Caco-2 (cell line): ENCODE measurements at regions of chr2 and their contacts with region 1.

Region 1: GRCh38 chr2:159155320-159155719 is 131.2 kb downstream of the WDSUB1 start:
- DNase-seq: peak; percentile 58 to 76
- H3K4me3 ChIP-seq: no peak overlapping the region
- H3K4me3 Mint-ChIP-seq: peak overlapping the region; percentile 21
- H3K27ac Mint-ChIP-seq: peak overlapping the region; percentile 54
- H3K4me1 ChIP-seq: peaks cover 56% of the 10 kb centered on the region
- H3K4me1 Mint-ChIP-seq: peaks cover 32% of the 10 kb centered on the region
- H3K27me3 ChIP-seq: no peaks in the 10 kb centered on the region
- H3K27me3 Mint-ChIP-seq: no peaks in the 10 kb centered on the region
- CTCF ChIP-seq: no peak

Region 2: DNA sequence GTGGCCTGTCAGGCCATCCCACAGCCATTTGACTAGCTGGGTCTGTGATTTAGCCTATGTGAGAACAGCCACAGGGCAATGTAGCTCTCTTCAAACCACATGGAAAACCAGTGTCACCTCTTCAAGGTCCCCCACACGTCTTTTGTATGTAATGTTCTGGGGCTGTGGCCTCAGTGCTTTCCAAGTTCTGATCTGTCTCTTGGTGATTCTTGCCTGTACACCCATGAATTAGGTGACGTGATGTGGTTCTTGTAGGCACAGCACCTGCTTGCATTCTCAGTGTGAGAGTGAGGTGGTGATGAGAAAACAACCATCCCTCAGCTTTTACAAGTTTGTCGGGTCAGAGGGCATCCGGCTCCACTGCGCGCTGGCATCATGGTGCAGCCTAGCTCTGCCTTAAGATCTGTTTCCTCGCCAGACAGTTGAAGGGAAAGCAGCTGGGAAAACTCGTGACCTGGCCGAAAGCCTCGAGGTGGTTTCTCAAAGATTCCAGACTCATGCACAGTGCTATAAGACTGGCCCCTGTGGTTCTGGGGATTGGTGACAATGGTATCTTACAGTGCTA is 61.1 kb before region 1 on chr2:
- CTCF ChIA-PET with region 1: no interaction called
- POLR2A ChIA-PET with region 1: no interaction called
- intact Hi-C with region 1: no loop called
- DNase-seq: no peak
- H3K4me3 ChIP-seq: no peak overlapping the region
- H3K4me3 Mint-ChIP-seq: no peak overlapping the region
- H3K27ac Mint-ChIP-seq: peak overlapping the region; percentile 23
- H3K4me1 ChIP-seq: peaks cover 21% of the 10 kb centered on the region
- H3K4me1 Mint-ChIP-seq: peaks cover 32% of the 10 kb centered on the region
- H3K27me3 ChIP-seq: no peaks in the 10 kb centered on the region
- H3K27me3 Mint-ChIP-seq: no peaks in the 10 kb centered on the region
- CTCF ChIP-seq: no peak

Region 3: GRCh38 chr2:159124441-159124911 is 30.8 kb before region 1 on chr2:
- CTCF ChIA-PET with region 1: no interaction called
- POLR2A ChIA-PET with region 1: interaction called, 3 read pairs
- intact Hi-C with region 1: loop called (anchors 2 kb)
- DNase-seq: peak; percentile 55 to 75
- H3K4me3 ChIP-seq: no peak overlapping the region
- H3K4me3 Mint-ChIP-seq: peak overlapping the region; percentile 19
- H3K27ac Mint-ChIP-seq: peak overlapping the region; percentile 87
- H3K4me1 ChIP-seq: peaks cover 31% of the 10 kb centered on the region
- H3K4me1 Mint-ChIP-seq: peaks cover 47% of the 10 kb centered on the region
- H3K27me3 ChIP-seq: no peaks in the 10 kb centered on the region
- H3K27me3 Mint-ChIP-seq: no peaks in the 10 kb centered on the region
- CTCF ChIP-seq: no peak